ENCODE measurements at regions of chr22 and their contacts with region 1.

Region 1: GRCh38 chr22:44309137-44309536 is 3.6 kb downstream of the SHISAL1 start:
- DNase-seq: peak; percentile 93
- H3K4me3 ChIP-seq: no peak overlapping the region
- CTCF ChIP-seq: no peak

Region 2: GRCh38 chr22:44026630-44027511 is 282.3 kb before region 1 on chr22:
- in situ Hi-C with region 1: loop called (anchors 10 kb)
- DNase-seq: no peak
- H3K4me3 ChIP-seq: no peak overlapping the region
- CTCF ChIP-seq: no peak

Region 3: GRCh38 chr22:44151676-44152075 is 157.5 kb before region 1 on chr22:
- in situ Hi-C with region 1: loop called (anchors 10 kb)
- DNase-seq: peak; percentile 79
- H3K4me3 ChIP-seq: no peak overlapping the region
- CTCF ChIP-seq: no peak

Region 4: DNA sequence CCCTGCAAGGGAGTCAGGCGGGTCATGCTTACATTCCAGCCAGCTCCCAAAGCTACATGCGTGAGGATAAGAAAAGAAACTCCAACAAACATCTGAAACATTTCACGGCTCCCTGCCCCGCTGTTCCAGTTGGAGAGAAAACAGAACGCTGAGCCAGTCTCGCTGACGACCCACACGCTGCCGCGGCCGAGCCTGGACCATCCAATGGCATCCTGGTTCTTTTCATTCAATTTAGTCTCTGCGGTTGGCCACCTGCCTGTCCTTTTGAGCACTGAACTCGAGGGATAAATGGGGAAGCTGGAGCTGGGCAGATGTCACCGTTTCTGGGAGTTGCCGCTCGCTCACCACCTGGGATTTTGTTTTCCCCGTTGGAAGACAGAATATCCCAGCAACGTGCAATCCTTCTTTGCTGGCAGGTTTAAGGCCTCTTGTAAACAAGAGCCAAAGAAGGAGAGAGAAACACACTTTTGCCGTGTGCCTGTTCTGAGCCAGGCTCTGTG is 48.9 kb after region 1 on chr22:
- in situ Hi-C with region 1: loop called (anchors 5 kb)
- DNase-seq: peak; percentile 32
- H3K4me3 ChIP-seq: no peak overlapping the region
- CTCF ChIP-seq: no peak

Region 5: GRCh38 chr22:44391481-44392445 is 82.6 kb after region 1 on chr22:
- in situ Hi-C with region 1: no loop called
- DNase-seq: no peak
- H3K4me3 ChIP-seq: no peak overlapping the region
- CTCF ChIP-seq: no peak

Measured in astrocyte of the cerebellum (primary cell).